Activated T-helper 1 cell treated with anti-CD3 and anti-CD28 coated beads, Interleukin-12 subunit alpha, Interleukin-12 subunit beta, Interleukin-2, Interleukin-4 antibody, amounts not matched to agents 30 ng/mL and 10 ng/mL and 1 ng/mL, durations not matched to agents 14 hours and 24 hours and 36 hours (primary cell): ENCODE measurements at regions of chr2 and their contacts with region 1.

Region 1: GRCh38 chr2:216034065-216034464 is 20.7 kb upstream of the MREG start:
- DNase-seq: peak; percentile 65
- H3K4me3 Mint-ChIP-seq: no peak overlapping the region
- H3K27ac Mint-ChIP-seq: peak overlapping the region; percentile 64
- H3K4me1 Mint-ChIP-seq: peaks cover 47% of the 10 kb centered on the region
- H3K27me3 Mint-ChIP-seq: no peaks in the 10 kb centered on the region

Region 2: GRCh38 chr2:216013080-216013909 is 20.8 kb before region 1 on chr2 and contains the start of gene MREG:
- intact Hi-C with region 1: loop called (anchors 1 kb)
- DNase-seq: peak; percentile 74
- H3K4me3 Mint-ChIP-seq: peak within 1 kb of the TSS; percentile 80
- H3K27ac Mint-ChIP-seq: peak within 1 kb of the TSS; percentile 56
- H3K4me1 Mint-ChIP-seq: peaks cover 53% of the 10 kb centered on the region
- H3K27me3 Mint-ChIP-seq: peaks cover 2% of the 10 kb centered on the region
- total RNA-seq, gene MREG: 9.2 and 10.1 TPM in 2 replicates

Region 3: DNA sequence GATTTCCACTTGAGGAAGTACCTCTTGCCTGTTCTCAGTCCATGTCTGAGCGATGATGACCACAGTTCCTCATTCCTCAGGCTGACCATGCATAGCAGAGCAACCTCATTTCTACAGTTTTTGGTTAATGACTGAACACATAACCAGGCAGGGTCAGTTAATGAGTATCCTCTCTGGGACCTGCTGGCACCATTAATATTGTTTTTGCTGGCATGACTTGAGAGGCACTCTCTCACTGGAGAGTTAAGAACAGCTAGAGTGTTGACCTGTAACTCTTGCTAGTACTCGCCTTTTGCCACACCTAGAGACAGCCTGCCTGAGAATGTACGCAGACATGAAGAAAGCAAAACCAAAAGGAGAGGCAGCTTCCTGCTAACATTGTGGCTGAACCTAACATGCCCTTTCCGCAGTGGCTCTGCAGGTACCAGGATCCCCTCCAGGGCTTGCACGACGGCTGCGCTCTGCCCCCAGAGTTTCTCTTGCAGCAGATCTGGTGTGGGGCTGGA is 23.7 kb after region 1 on chr2:
- intact Hi-C with region 1: loop called (anchors 1 kb)
- DNase-seq: peak; percentile 60
- H3K4me3 Mint-ChIP-seq: peak overlapping the region; percentile 81
- H3K27ac Mint-ChIP-seq: peak overlapping the region; percentile 91
- H3K4me1 Mint-ChIP-seq: peaks cover 32% of the 10 kb centered on the region
- H3K27me3 Mint-ChIP-seq: no peaks in the 10 kb centered on the region

Region 4: DNA sequence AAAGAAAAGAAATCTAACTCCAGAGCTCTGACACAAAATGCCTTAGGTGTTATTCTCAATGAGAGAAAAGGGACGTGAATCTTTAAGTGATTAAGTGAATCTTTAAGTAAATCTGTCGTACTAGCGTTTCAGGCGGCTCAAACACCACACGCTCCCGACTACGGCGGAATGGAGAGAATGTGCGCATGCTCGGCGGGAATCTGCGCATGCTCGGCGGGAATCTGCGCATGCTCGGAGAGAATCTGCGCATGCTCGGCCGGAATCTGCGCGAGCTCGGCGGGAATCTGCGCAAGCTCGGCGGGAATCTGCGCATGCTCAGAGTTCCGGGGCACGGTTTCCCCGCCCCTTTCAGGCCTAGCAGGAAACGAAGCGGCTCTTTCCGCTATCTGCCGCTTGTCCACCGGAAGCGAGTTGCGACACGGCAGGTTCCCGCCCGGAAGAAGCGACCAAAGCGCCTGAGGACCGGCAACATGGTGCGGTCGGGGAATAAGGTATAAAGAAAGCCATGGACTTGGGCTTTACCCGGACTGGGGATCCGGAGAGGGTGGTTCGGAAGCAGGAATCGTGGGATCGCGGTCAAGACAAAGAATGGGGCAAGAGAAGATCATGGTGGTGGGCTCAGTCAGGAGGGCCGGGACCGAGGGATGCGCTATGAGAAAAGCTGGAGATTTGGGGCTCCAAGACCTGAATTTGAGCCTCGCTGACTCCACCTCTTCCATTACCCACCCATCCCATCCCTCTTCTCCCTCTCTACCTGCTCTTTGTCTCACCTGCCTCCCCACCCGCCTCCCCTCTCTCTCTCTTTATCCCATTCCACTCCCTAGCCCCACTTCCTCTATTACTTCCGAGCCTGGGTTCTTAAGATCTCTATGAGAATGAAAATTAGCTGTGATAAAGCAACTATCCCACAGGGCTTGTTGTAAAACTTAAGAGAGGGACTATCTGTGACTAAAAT is 75.2 kb after region 1 on chr2 and contains the start of gene XRCC5:
- intact Hi-C with region 1: loop called (anchors 1 kb)
- DNase-seq: peak; percentile 95
- H3K4me3 Mint-ChIP-seq: peak within 1 kb of the TSS; percentile 99
- H3K27ac Mint-ChIP-seq: peak within 1 kb of the TSS; percentile 98
- H3K4me1 Mint-ChIP-seq: peaks cover 48% of the 10 kb centered on the region
- H3K27me3 Mint-ChIP-seq: no peaks in the 10 kb centered on the region
- total RNA-seq, gene XRCC5: 430 and 484 TPM in 2 replicates

Region 5: DNA sequence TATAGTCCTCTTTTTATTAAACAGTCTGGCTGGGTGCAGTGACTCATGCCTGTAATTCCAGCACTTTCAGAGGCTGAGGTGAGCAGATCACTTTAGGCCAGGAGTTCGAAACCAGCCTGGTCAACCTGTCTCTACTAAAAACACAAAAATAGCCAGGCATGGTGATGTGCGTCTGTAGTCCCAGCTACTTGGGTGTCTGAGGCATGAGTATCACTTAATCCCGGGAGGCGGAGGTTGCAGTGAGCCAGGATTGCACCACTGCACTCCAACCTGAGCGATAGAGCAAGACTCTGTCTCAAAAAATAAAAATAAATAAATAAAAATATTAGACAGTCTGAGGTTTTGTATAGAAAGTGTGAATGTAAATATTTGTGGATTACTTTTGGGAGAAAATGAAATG is 92.9 kb after region 1 on chr2:
- intact Hi-C with region 1: no loop called
- DNase-seq: no peak
- H3K4me3 Mint-ChIP-seq: no peak overlapping the region
- H3K27ac Mint-ChIP-seq: no peak overlapping the region
- H3K4me1 Mint-ChIP-seq: peaks cover 58% of the 10 kb centered on the region
- H3K27me3 Mint-ChIP-seq: no peaks in the 10 kb centered on the region

Region 6: GRCh38 chr2:216139884-216140283 is 105.8 kb after region 1 on chr2:
- intact Hi-C with region 1: loop called (anchors 1 kb)
- DNase-seq: no peak
- H3K4me3 Mint-ChIP-seq: no peak overlapping the region
- H3K27ac Mint-ChIP-seq: peak overlapping the region; percentile 31
- H3K4me1 Mint-ChIP-seq: peaks cover 49% of the 10 kb centered on the region
- H3K27me3 Mint-ChIP-seq: no peaks in the 10 kb centered on the region

Region 7: GRCh38 chr2:216261042-216261537 is 227.0 kb after region 1 on chr2:
- intact Hi-C with region 1: no loop called
- DNase-seq: no peak
- H3K4me3 Mint-ChIP-seq: no peak overlapping the region
- H3K27ac Mint-ChIP-seq: no peak overlapping the region
- H3K4me1 Mint-ChIP-seq: no peaks in the 10 kb centered on the region
- H3K27me3 Mint-ChIP-seq: no peaks in the 10 kb centered on the region

Region 8: GRCh38 chr2:216666461-216667233 is 632.6 kb after region 1 on chr2:
- intact Hi-C with region 1: loop called (anchors 2 kb)
- DNase-seq: peak; percentile 62
- H3K4me3 Mint-ChIP-seq: no peak overlapping the region
- H3K27ac Mint-ChIP-seq: no peak overlapping the region
- H3K4me1 Mint-ChIP-seq: no peaks in the 10 kb centered on the region
- H3K27me3 Mint-ChIP-seq: peaks cover 2% of the 10 kb centered on the region